MCF 10A (cell line): ENCODE measurements at regions of chr14 and their contacts with region 1.

Region 1: DNA sequence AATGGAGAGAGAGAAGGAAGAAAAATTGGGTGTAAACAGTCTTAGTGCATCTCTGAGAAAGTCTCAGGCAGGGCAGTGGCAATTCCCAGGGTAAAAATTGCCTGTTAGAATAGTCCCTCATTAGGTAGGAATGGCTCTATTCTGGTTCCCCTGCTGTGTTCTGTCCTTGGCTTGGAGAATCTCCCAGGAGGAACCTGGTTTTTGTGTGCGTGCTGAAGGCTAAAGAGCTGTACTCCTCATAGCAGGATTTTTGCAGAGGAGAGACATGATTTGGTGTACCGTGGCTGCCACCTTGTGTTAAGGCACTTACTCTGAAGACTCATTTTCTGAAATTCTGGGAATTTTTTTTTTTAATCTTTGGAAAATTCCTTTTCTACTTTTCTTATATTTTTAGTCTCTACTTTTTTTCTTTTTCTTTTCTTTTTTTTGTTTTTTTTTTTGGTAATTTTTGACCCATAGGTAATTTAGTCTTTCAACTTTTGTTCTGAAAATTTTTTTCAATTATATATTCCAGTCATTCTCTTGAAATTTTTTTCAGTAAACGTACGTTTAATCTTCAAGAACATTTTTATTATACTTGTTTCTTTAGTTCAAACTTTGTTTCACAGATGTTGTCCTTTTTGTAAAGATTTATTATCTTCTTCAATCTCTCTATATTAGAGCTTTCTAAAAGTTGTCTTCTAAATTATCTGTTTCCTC is 63.8 kb downstream of the FBXO33 start:
- DNase-seq: peak; percentile 78
- H3K4me3 Mint-ChIP-seq: no peak overlapping the region
- H3K27ac Mint-ChIP-seq: no peak overlapping the region
- H3K4me1 Mint-ChIP-seq: peaks cover 6% of the 10 kb centered on the region
- H3K27me3 Mint-ChIP-seq: no peaks in the 10 kb centered on the region
- CTCF ChIP-seq: peak; percentile 42

Region 2: GRCh38 chr14:38762426-38762825 is 606.0 kb before region 1 on chr14:
- CTCF ChIA-PET with region 1: no interaction called
- POLR2A ChIA-PET with region 1: no interaction called
- intact Hi-C with region 1: no loop called
- DNase-seq: no peak
- H3K4me3 Mint-ChIP-seq: no peak overlapping the region
- H3K27ac Mint-ChIP-seq: no peak overlapping the region
- H3K4me1 Mint-ChIP-seq: no peaks in the 10 kb centered on the region
- H3K27me3 Mint-ChIP-seq: no peaks in the 10 kb centered on the region
- CTCF ChIP-seq: no peak

Region 3: GRCh38 chr14:39102969-39103957 is 265.1 kb before region 1 on chr14 and contains the start of gene SEC23A:
- CTCF ChIA-PET with region 1: interaction called, 9 read pairs
- POLR2A ChIA-PET with region 1: interaction called, 3 read pairs
- intact Hi-C with region 1: loop called (anchors 1 kb)
- DNase-seq: peak; percentile 88
- H3K4me3 Mint-ChIP-seq: peak within 1 kb of the TSS; percentile 95
- H3K27ac Mint-ChIP-seq: peak within 1 kb of the TSS; percentile 98
- H3K4me1 Mint-ChIP-seq: peaks cover 16% of the 10 kb centered on the region
- H3K27me3 Mint-ChIP-seq: no peaks in the 10 kb centered on the region
- CTCF ChIP-seq: no peak
- total RNA-seq, gene SEC23A: 79.3 and 82.4 TPM in 2 replicates

Region 4: GRCh38 chr14:39174560-39175444 is 193.6 kb before region 1 on chr14 and contains the start of gene PNN:
- CTCF ChIA-PET with region 1: interaction called, 4 read pairs
- POLR2A ChIA-PET with region 1: interaction called, 7 read pairs
- intact Hi-C with region 1: loop called (anchors 1 kb)
- DNase-seq: peak; percentile 99
- H3K4me3 Mint-ChIP-seq: peak within 1 kb of the TSS; percentile 93
- H3K27ac Mint-ChIP-seq: peak within 1 kb of the TSS; percentile 98
- H3K4me1 Mint-ChIP-seq: peaks cover 8% of the 10 kb centered on the region
- H3K27me3 Mint-ChIP-seq: no peaks in the 10 kb centered on the region
- CTCF ChIP-seq: no peak
- total RNA-seq, gene PNN: 82.6 and 96.7 TPM in 2 replicates

Region 5: DNA sequence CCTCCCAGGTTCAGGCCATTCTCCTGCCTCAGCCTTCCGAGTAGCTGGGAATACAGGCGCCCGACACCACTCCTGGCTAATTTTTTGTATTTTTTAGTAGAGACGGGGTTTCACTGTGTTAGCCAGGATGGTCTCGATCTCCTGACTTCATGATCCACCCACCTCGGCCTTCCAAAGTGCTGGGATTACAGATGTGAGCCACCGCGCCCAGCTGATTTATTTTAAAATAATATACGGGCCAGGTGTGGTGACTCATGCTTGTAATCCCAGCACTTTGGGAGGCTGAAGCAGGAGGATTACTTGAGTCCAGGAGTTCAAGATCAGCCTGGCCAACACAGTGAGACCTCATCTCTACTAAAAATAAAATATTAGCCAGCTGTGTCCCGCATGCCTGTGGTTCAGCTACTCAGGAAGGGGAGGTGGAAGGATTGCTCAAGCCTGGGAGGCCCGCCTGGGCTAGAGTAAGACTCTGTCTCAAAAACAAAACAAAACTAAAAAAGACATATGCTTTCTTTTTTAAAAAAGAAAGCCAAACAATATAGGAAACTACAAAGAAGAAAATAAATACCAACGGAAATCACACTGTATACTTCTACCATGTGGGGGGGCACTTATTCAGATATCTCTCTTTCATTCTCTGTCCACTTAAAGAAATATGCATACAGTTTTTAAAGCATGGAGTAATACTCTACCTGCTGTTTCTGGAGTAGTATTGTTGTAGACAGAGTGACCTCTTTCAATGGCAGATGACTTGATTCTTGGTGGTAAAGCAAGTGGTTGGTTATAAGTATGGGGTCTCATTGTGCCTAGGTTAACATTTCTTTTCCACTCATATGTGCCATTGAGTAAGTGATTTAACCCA is 135.6 kb before region 1 on chr14:
- CTCF ChIA-PET with region 1: interaction called, 13 read pairs
- POLR2A ChIA-PET with region 1: interaction called, 3 read pairs
- intact Hi-C with region 1: loop called (anchors 5 kb)
- DNase-seq: peak; percentile 57
- H3K4me3 Mint-ChIP-seq: peak overlapping the region; percentile 7
- H3K27ac Mint-ChIP-seq: peak overlapping the region; percentile 92
- H3K4me1 Mint-ChIP-seq: peaks cover 12% of the 10 kb centered on the region
- H3K27me3 Mint-ChIP-seq: no peaks in the 10 kb centered on the region
- CTCF ChIP-seq: no peak

Region 6: GRCh38 chr14:39469094-39469710 is 100.8 kb after region 1 on chr14:
- CTCF ChIA-PET with region 1: no interaction called
- POLR2A ChIA-PET with region 1: no interaction called
- intact Hi-C with region 1: no loop called
- DNase-seq: no peak
- H3K4me3 Mint-ChIP-seq: no peak overlapping the region
- H3K27ac Mint-ChIP-seq: no peak overlapping the region
- H3K4me1 Mint-ChIP-seq: no peaks in the 10 kb centered on the region
- H3K27me3 Mint-ChIP-seq: peaks cover 27% of the 10 kb centered on the region
- CTCF ChIP-seq: no peak